Activated CD4-positive, alpha-beta memory T cell treated with anti-CD3 and anti-CD28 coated beads for 36 hours (primary cell): ENCODE measurements at regions of chr19 and their contacts with region 1.

Region 1: DNA sequence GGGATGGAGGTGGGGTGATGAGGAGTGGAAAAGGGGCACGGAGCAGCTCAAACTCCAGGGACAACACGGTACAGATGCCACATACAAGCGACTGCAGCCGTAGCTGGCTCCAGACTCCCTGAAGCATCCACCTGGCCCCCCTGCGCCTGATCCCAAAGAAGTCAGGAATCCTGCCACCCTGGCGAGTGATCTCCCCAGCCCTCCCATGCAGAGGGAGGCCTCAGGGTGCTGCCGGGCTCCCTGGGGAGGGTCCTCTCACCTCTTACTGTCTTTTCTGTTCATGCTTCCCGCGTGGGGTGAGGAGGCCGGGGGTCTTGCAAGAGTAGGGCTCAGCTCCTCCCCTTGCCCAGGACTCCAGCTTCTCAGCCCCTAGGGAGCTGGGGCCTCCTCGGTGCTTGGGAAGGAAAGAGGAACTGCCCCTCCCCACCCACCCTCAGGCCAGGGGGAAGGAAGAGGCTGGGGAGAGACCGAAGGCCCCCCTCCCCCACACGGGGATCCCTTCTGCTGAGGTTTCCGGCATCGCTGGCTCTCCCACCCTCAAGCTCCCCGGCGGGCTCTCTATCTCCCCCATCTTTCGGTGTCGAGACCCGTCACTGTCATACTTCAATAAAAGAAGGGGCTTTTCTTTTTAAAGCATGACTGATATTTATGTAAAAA is at the start of gene RASGRP4:
- DNase-seq: peak; percentile 79
- H3K4me3 Mint-ChIP-seq: peak within 1 kb of the TSS; percentile 61
- H3K27ac Mint-ChIP-seq: peak within 1 kb of the TSS; percentile 92
- H3K4me1 Mint-ChIP-seq: peaks cover 35% of the 10 kb centered on the region
- H3K27me3 Mint-ChIP-seq: no peaks in the 10 kb centered on the region
- total RNA-seq, gene RASGRP4: 7.4 to 8.3 TPM

Region 2: DNA sequence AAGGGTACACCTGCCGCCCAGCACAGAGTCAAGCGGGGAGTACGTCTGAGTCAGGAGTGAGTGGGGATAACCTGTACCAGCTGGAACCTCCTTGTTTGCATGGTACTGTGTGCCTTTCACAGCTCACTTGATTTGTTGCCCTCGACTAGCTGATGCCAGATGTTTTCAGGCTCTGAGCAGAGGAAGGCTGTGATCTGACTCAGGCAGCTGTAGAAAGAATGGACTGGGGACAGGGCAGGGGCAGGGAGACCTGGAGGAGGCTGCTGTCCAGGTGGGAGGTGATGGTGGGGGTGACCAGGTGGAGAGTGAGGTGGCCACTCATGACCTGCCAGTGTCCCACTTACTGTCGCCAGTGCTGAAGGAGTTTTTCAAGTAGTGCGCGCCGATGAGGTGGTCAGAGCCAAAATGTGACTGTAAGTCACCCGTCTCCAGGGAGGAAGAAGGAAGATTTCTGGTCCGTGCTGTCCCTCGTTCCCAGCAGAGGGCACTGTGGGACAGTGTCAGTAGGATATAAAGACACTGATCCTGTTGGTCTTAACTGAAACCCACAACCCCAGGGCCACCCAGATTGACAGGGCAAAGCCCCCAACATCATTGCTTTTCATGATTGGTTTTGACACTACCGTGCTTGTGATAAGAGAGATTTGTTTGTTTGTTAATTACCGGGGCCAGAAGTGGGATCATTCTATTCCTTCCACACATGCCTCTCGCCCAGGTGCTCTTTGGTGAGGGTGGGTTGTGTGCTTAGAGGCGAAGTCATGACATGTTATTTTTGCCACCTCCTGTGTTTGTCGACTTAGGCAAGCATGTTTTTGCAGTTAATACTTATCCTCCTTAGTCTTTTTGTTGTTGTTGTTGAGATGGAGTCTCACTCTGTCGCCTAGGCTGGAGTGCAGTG is 330.3 kb before region 1 on chr19:
- CTCF ChIA-PET with region 1: no interaction called
- POLR2A ChIA-PET with region 1: no interaction called
- intact Hi-C with region 1: no loop called
- DNase-seq: peak; percentile 71
- H3K4me3 Mint-ChIP-seq: no peak overlapping the region
- H3K27ac Mint-ChIP-seq: no peak overlapping the region
- H3K4me1 Mint-ChIP-seq: no peaks in the 10 kb centered on the region
- H3K27me3 Mint-ChIP-seq: no peaks in the 10 kb centered on the region

Region 3: DNA sequence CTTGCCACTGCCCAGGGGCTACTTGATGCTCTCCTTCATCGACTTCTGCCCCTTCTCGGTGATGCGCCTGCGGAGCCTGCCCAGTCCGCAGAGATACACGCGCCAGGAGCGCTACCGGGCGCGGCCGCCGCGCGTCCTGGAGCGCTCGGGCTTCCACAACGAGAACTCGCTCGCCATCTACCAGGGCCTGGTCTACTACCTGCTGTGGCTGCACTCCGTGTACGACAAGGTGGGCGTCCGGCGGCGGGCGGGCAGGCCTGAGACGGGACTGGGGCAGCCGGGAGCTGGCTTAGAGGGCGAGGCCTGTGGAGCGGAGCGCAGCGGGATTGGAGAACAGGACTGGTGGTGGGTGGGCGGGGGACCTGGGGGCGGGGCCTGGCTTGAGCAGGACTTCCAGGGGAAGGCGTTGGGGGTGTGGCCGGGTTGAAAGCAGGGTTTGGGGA is 64.3 kb before region 1 on chr19:
- CTCF ChIA-PET with region 1: no interaction called
- POLR2A ChIA-PET with region 1: no interaction called
- intact Hi-C with region 1: no loop called
- DNase-seq: peak; percentile 85
- H3K4me3 Mint-ChIP-seq: peak overlapping the region; percentile 82
- H3K27ac Mint-ChIP-seq: no peak overlapping the region
- H3K4me1 Mint-ChIP-seq: peaks cover 8% of the 10 kb centered on the region
- H3K27me3 Mint-ChIP-seq: peaks cover 12% of the 10 kb centered on the region

Region 4: GRCh38 chr19:38387550-38388348 is 38.2 kb before region 1 on chr19 and contains the start of gene GGN:
- CTCF ChIA-PET with region 1: no interaction called
- POLR2A ChIA-PET with region 1: no interaction called
- intact Hi-C with region 1: loop called (anchors 5 kb)
- DNase-seq: peak; percentile 92
- H3K4me3 Mint-ChIP-seq: peak within 1 kb of the TSS; percentile 78
- H3K27ac Mint-ChIP-seq: peak within 1 kb of the TSS; percentile 69
- H3K4me1 Mint-ChIP-seq: peaks cover 25% of the 10 kb centered on the region
- H3K27me3 Mint-ChIP-seq: peaks cover 3% of the 10 kb centered on the region
- total RNA-seq, gene GGN: 0.41 to 1.2 TPM

Region 5: GRCh38 chr19:38538793-38539528 is 113.0 kb after region 1 on chr19:
- CTCF ChIA-PET with region 1: no interaction called
- POLR2A ChIA-PET with region 1: no interaction called
- intact Hi-C with region 1: loop called (anchors 2 kb)
- DNase-seq: peak; percentile 58
- H3K4me3 Mint-ChIP-seq: peak overlapping the region; percentile 49
- H3K27ac Mint-ChIP-seq: peak overlapping the region; percentile 91
- H3K4me1 Mint-ChIP-seq: peaks cover 40% of the 10 kb centered on the region
- H3K27me3 Mint-ChIP-seq: no peaks in the 10 kb centered on the region

Region 6: GRCh38 chr19:38658462-38659306 is 232.7 kb after region 1 on chr19:
- CTCF ChIA-PET with region 1: no interaction called
- POLR2A ChIA-PET with region 1: no interaction called
- intact Hi-C with region 1: loop called (anchors 1 kb)
- DNase-seq: no peak
- H3K4me3 Mint-ChIP-seq: no peak overlapping the region
- H3K27ac Mint-ChIP-seq: no peak overlapping the region
- H3K4me1 Mint-ChIP-seq: peaks cover 69% of the 10 kb centered on the region
- H3K27me3 Mint-ChIP-seq: no peaks in the 10 kb centered on the region

Region 7: DNA sequence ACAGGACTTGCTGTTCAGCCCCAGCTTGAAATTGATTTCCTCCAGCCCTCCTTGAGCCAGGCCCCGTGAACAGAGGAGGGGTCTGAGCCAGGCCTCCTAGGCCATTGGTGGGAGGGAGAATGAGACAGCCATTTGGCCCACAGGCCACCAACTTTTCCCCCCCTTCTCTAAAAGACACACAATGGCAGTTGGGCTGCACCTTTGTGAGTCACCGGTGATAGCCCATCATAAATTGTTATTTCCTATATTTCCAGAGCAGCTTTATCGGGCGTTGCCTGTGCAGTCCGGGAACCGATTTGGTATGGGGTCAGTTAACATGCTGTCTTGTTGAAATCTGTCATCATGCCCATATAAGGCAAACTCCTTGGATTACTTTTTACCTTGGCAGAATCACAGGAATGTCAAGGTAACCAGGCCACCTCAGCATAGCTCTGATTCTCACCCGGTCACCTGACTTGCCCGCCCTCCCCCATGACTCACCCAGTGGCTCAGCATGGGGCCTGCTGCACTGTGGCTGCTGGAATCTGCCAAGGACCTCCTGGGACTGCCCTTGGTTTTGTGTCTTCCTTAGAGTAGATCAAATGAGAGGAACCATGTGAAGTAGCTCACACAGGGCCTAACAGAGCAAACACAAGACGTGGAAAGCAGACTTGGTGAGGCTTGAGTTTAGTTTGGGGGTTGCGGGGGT is 257.6 kb after region 1 on chr19:
- CTCF ChIA-PET with region 1: no interaction called
- POLR2A ChIA-PET with region 1: no interaction called
- intact Hi-C with region 1: loop called (anchors 5 kb)
- DNase-seq: peak; percentile 82
- H3K4me3 Mint-ChIP-seq: no peak overlapping the region
- H3K27ac Mint-ChIP-seq: peak overlapping the region; percentile 81
- H3K4me1 Mint-ChIP-seq: peaks cover 86% of the 10 kb centered on the region
- H3K27me3 Mint-ChIP-seq: no peaks in the 10 kb centered on the region

Region 8: DNA sequence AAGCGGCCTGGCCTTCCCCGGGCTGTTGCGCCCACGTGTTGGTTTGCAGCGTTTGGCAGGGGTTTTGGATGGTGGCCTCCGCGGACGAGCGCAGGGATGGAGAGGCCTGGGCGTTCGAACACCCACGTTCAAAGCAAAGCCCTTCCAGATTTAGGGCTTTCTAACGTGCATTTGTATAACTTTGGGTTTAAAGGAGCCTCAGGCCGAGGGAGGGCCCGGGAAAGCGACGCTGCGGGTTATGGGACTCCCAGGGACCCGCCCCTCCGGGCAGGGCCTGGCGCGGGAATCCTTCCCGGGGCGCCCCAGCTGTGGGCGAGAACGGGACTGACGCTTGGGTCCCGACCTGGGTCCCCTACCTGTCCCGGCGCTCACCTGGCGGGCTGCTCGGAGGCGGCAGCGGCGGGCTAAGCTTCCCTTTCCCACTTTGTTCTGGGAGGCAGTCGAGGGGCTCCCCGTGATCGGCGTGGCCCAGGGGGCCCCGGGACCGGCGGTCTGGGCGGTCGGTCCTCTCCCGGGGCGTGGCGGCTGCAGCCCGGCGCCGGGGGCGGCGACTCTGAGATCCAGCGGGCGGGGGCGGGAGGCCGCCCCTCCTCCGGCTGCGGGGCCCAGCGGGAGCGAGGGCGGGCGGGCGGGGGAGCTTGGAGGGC is 549.4 kb after region 1 on chr19 and contains the start of gene FBXO17:
- CTCF ChIA-PET with region 1: no interaction called
- POLR2A ChIA-PET with region 1: no interaction called
- intact Hi-C with region 1: loop called (anchors 5 kb)
- DNase-seq: no peak
- H3K4me3 Mint-ChIP-seq: no peak within 1 kb of the TSS
- H3K27ac Mint-ChIP-seq: no peak within 1 kb of the TSS
- H3K4me1 Mint-ChIP-seq: peaks cover 24% of the 10 kb centered on the region
- H3K27me3 Mint-ChIP-seq: peaks cover 25% of the 10 kb centered on the region
- total RNA-seq, gene FBXO17: not detected